K562 (cell line): ENCODE measurements at regions of chr11 and their contacts with region 1.

Region 1: GRCh38 chr11:57741132-57742086 is at the start of gene SELENOH:
- DNase-seq: peak; percentile 88 to 98 (median 92)
- ATAC-seq: peak; percentile 96
- H3K4me3 ChIP-seq: peak within 1 kb of the TSS; percentile 70
- H3K27ac ChIP-seq: peak within 1 kb of the TSS; percentile 86
- H3K4me1 ChIP-seq: peaks cover 10 to 11% of the 10 kb centered on the region in 2 experiments; a peak in 4 of 5 replicates
- H3K27me3 ChIP-seq: no peaks in the 10 kb centered on the region
- CTCF ChIP-seq: no peak
- EP300 ChIP-seq: peak; percentile 69
- POLR2A ChIP-seq: peak; percentile 95
- RAD21 ChIP-seq: peak in 1 of 2 experiments; percentile 46; a peak in 3 of 4 replicates
- polyA plus RNA-seq, gene SELENOH: 16.6 to 39.5 TPM

Region 2: DNA sequence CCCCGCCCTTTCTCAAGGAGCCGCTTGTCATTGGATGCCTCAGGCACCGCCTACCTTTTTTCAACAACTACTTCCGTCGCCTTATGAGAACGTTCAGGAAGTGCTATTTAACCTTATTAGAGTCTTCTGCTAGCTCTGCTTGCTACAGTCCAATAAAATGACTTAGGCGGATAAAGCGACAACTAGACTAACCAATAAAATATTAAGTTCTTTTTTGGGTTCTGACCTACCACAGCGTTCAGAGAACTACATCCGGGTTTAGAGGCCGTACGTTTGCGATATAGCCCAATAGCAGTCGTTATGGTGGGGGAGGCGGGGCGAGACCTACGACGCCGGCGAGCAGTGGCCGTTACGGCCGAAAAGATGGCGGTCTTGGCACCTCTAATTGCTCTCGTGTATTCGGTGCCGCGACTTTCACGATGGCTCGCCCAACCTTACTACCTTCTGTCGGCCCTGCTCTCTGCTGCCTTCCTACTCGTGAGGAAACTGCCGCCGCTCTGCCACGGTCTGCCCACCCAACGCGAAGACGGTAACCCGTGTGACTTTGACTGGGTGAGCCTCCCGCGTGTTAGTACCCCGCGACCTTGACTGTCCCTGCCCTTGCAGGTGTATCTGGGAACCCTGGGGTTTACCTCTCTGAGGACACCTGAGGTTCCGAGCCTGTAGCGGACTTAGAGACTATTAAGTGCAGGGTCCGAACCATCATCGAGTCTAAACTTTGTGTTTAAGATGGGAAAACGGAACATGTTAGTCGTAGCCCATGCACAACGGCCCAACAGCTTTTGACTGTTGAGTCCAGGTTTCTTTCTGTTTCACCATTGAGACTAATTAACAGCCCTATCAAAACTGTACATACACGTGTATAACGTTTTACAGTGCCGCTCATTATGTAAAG is 28.9 kb before region 1 on chr11 and contains the start of gene TMX2:
- CTCF ChIA-PET with region 1: no interaction called
- POLR2A ChIA-PET with region 1: interaction called, 6 read pairs
- in situ Hi-C with region 1: no loop called
- intact Hi-C with region 1: loop called (anchors 1 kb)
- DNase-seq: peak; percentile 68 to 97 (median 81)
- ATAC-seq: peak; percentile 95
- H3K4me3 ChIP-seq: peak within 1 kb of the TSS; percentile 95
- H3K27ac ChIP-seq: peak within 1 kb of the TSS; percentile 99
- H3K4me1 ChIP-seq: peaks cover 9% of the 10 kb centered on the region in 2 experiments; a peak in 3 of 5 replicates
- H3K27me3 ChIP-seq: no peaks in the 10 kb centered on the region
- CTCF ChIP-seq: no peak
- EP300 ChIP-seq: no peak
- POLR2A ChIP-seq: peak; percentile 95
- RAD21 ChIP-seq: 0 out of 4 replicates have a peak, but pooled peaks of 1 of the 2 experiments have one; percentile 11
- polyA plus RNA-seq, gene TMX2: 381 to 433 TPM

Region 3: GRCh38 chr11:57729479-57729878 is 11.9 kb before region 1 on chr11:
- CTCF ChIA-PET with region 1: no interaction called
- POLR2A ChIA-PET with region 1: interaction called, 10 read pairs
- in situ Hi-C with region 1: no loop called
- intact Hi-C with region 1: no loop called
- DNase-seq: no peak
- ATAC-seq: no peak
- H3K4me3 ChIP-seq: no peak overlapping the region
- H3K27ac ChIP-seq: peak overlapping the region; percentile 8; the same call in 1 of the 3 replicates
- H3K4me1 ChIP-seq: peaks cover 3 to 4% of the 10 kb centered on the region in 2 experiments; a peak in 4 of 5 replicates
- H3K27me3 ChIP-seq: no peaks in the 10 kb centered on the region
- CTCF ChIP-seq: no peak
- EP300 ChIP-seq: no peak
- POLR2A ChIP-seq: no peak
- RAD21 ChIP-seq: no peak

Region 4: DNA sequence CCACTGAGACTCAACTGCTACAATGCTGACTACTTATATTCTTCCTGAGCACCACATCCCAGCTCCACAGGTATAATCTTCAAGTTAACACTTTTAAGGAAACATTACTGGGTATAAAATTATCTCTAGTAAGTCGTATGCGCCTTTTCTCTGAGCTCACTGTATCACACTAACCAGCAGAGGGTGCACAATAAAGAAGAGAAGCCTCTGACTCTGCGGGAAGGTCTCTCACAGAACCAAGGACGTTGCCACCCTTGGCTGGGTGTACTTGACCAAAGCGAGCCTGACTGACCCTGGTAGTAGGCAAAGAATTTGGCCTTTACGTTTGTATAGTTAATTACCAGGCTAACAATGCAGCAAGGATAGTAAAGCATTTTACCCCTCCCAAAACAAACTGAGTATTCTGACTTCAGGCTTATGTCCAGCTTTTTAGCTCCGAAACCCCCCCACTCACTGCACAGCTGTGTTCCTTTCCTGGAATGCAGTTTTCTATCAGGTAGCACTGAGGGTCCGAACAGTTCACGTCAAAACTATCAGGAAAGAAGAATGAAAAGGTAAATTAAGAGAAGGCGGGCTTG is 10.4 kb after region 1 on chr11 and contains the start of gene BTBD18:
- CTCF ChIA-PET with region 1: no interaction called
- POLR2A ChIA-PET with region 1: interaction called, 25 read pairs
- in situ Hi-C with region 1: no loop called
- intact Hi-C with region 1: no loop called
- DNase-seq: peak in 3 of 4 experiments; percentile 38 to 56 (median 44)
- ATAC-seq: peak; percentile 94
- H3K4me3 ChIP-seq: no peak within 1 kb of the TSS
- H3K27ac ChIP-seq: peak within 1 kb of the TSS; percentile 6; the same call in 1 of the 3 replicates
- H3K4me1 ChIP-seq: peaks cover 0 to 11% of the 10 kb centered on the region in 2 experiments; a peak in 2 of 5 replicates
- H3K27me3 ChIP-seq: no peaks in the 10 kb centered on the region
- CTCF ChIP-seq: peak; percentile 45 to 70 (median 52); a peak in 5 of 6 replicates
- EP300 ChIP-seq: no peak
- POLR2A ChIP-seq: no peak
- RAD21 ChIP-seq: peak; percentile 54 to 67
- polyA plus RNA-seq, gene BTBD18: 0.06 TPM in 1 of 2 experiments, not detected in the other

Region 5: GRCh38 chr11:57761301-57762234 is 20.2 kb after region 1 on chr11 and contains the start of gene CTNND1:
- CTCF ChIA-PET with region 1: no interaction called
- POLR2A ChIA-PET with region 1: interaction called, 21 read pairs
- in situ Hi-C with region 1: no loop called
- intact Hi-C with region 1: no loop called
- DNase-seq: peak; percentile 66 to 99 (median 81)
- ATAC-seq: peak; percentile 93
- H3K4me3 ChIP-seq: peak within 1 kb of the TSS; percentile 62
- H3K27ac ChIP-seq: peak within 1 kb of the TSS; percentile 95
- H3K4me1 ChIP-seq: peaks cover 7 to 22% of the 10 kb centered on the region in 2 experiments; a peak in 4 of 5 replicates
- H3K27me3 ChIP-seq: no peaks in the 10 kb centered on the region
- CTCF ChIP-seq: no peak
- EP300 ChIP-seq: peak; percentile 67
- POLR2A ChIP-seq: peak; percentile 94
- RAD21 ChIP-seq: no peak
- polyA plus RNA-seq, gene CTNND1: 11.1 to 23.8 TPM